ENCODE measurements at regions of chr1 and their contacts with region 1.

Region 1: GRCh38 chr1:43858328-43858731 is 75.3 kb upstream of the ARTN start:
- DNase-seq: peak; percentile 99
- H3K4me3 ChIP-seq: no peak overlapping the region
- H3K27ac ChIP-seq: peak overlapping the region; percentile 20
- H3K4me1 ChIP-seq: peaks cover 41% of the 10 kb centered on the region
- H3K27me3 ChIP-seq: no peaks in the 10 kb centered on the region
- CTCF ChIP-seq: no peak

Region 2: DNA sequence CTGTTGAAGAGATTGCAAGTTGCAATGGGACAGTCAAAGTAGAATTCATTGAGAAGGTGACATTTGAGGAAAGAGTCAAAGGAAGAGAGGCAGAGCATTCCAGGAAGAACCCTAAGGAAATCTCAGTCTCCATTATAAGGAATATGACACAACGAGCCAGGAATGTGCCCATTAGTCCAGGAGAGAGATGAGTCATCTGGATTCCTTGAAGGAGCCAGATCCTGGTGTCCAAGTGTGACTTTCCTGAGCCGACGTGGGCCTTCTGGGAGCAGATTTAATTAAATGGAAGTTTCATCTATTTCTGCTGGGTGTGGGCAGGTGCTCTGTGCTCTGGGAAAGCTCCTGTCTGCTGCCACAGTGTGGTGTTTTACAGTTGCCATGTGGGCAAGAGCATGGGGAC is 36.3 kb before region 1 on chr1:
- CTCF ChIA-PET with region 1: no interaction called
- dilution Hi-C with region 1: no loop called
- in situ Hi-C with region 1: no loop called
- intact Hi-C with region 1: loop called (anchors 2 kb)
- DNase-seq: peak; percentile 81
- H3K4me3 ChIP-seq: no peak overlapping the region
- H3K27ac ChIP-seq: peak overlapping the region; percentile 72
- H3K4me1 ChIP-seq: peaks cover 32% of the 10 kb centered on the region
- H3K27me3 ChIP-seq: no peaks in the 10 kb centered on the region
- CTCF ChIP-seq: no peak

Region 3: GRCh38 chr1:43899458-43899857 is 41.1 kb after region 1 on chr1:
- CTCF ChIA-PET with region 1: no interaction called
- dilution Hi-C with region 1: loop called (anchors 5 kb)
- in situ Hi-C with region 1: no loop called
- intact Hi-C with region 1: no loop called
- DNase-seq: no peak
- H3K4me3 ChIP-seq: no peak overlapping the region
- H3K27ac ChIP-seq: no peak overlapping the region
- H3K4me1 ChIP-seq: no peaks in the 10 kb centered on the region
- H3K27me3 ChIP-seq: no peaks in the 10 kb centered on the region
- CTCF ChIP-seq: no peak